OCI-LY7 (cell line): ENCODE measurements at regions of chr12 and their contacts with region 1.

Region 1: DNA sequence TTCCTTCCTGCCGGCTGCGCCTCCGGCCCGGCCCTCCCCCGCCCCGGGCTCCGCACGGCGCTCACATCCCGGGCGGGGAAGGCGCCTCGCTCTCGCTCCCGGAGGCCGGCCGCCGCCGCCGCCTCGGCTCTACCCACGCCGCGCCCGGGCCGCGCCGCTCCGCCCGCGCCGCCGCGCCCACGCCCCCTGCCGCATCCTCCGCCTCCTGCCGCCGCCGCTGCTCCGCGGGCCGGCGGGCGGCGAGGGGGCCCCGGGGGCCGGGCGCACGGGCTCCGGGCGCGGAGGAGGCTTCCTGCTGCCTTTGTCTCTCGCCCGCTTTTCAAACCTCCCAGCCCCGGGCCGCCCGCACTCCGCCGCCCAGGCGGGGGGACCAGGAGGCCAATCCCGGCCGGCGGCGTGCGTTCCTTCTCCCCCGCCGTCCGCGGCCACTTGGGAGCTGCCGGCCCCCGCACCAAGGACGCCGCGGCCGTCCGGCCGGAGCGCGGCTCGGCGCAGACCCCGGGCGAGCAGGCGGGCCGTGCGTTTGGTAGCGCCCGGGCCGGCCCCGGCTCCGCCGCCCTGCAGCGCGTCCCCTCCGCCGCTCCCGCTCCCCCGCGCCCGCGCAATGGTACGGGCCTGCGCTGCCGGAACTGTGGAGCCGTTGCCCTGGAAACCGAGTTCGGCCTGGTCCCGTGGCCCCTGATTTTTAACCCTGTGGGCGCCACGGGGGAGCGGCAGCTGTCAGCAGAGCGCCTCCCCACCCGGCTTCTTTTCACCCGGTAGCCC is at the start of gene FBXL14:
- DNase-seq: peak; percentile 97
- H3K4me3 ChIP-seq: peak within 1 kb of the TSS; percentile 86
- H3K27ac ChIP-seq: peak within 1 kb of the TSS; percentile 80
- H3K4me1 ChIP-seq: peaks cover 38% of the 10 kb centered on the region
- CTCF ChIP-seq: no peak
- total RNA-seq, gene FBXL14: 45.5 and 46.2 TPM in 2 replicates

Region 2: DNA sequence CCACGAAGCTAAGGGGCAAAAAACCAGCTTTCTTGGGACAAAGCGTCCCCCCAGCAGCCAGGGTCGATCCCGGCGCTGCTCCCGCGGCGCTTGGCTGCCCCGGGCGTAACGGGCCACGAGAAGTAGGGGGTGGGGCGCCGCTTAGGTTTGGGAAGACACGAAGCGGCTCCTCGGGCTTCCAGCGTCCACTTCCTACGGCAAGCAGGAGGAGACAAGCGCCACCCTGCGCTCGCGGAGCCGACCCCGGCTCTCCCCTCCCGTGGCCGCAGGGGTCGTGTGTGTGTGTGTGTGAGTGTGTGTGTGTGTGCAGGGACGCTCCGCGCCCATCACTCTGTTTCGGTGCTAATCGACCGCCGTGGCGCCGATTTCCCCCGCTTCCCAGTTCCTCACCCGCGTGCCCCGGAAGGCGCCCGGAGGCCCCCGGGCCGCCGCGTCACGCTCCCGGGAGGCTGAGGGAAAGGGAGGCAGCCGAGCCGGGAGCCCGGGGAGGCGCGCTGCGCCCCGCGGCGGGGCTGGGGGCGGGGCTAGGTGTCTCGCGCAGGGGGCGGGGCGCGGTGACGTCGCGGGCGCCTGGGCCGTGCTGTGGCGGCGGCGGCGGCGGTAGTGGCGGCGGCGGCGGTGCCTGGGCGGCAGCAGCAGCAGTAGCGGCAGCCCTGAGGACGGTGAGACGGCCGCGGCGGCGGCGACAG is 603.6 kb before region 1 on chr12 and contains the start of gene ERC1:
- CTCF ChIA-PET with region 1: no interaction called
- POLR2A ChIA-PET with region 1: no interaction called
- intact Hi-C with region 1: loop called (anchors 10 kb)
- DNase-seq: peak; percentile 88
- H3K4me3 ChIP-seq: peak within 1 kb of the TSS; percentile 87
- H3K27ac ChIP-seq: peak within 1 kb of the TSS; percentile 66
- H3K4me1 ChIP-seq: peaks cover 38% of the 10 kb centered on the region
- CTCF ChIP-seq: peak; percentile 44
- total RNA-seq, gene ERC1: 26.9 and 37.0 TPM in 2 replicates

Region 3: GRCh38 chr12:1204581-1205121 is 389.8 kb before region 1 on chr12:
- CTCF ChIA-PET with region 1: no interaction called
- POLR2A ChIA-PET with region 1: no interaction called
- intact Hi-C with region 1: loop called (anchors 5 kb)
- DNase-seq: peak; percentile 86
- H3K4me3 ChIP-seq: peak overlapping the region; percentile 72
- H3K27ac ChIP-seq: peak overlapping the region; percentile 100
- H3K4me1 ChIP-seq: peaks cover 63% of the 10 kb centered on the region
- CTCF ChIP-seq: no peak

Region 4: GRCh38 chr12:1553987-1554982 is 40.2 kb before region 1 on chr12:
- CTCF ChIA-PET with region 1: no interaction called
- POLR2A ChIA-PET with region 1: interaction called, 3 read pairs
- intact Hi-C with region 1: loop called (anchors 2 kb)
- DNase-seq: peak; percentile 96
- H3K4me3 ChIP-seq: peak overlapping the region; percentile 49
- H3K27ac ChIP-seq: peak overlapping the region; percentile 89
- H3K4me1 ChIP-seq: peaks cover 45% of the 10 kb centered on the region
- CTCF ChIP-seq: no peak

Region 5: GRCh38 chr12:1605129-1606020 is 10.9 kb after region 1 on chr12:
- CTCF ChIA-PET with region 1: no interaction called
- POLR2A ChIA-PET with region 1: interaction called, 31 read pairs
- intact Hi-C with region 1: no loop called
- DNase-seq: peak; percentile 85
- H3K4me3 ChIP-seq: peak overlapping the region; percentile 52
- H3K27ac ChIP-seq: no peak overlapping the region
- H3K4me1 ChIP-seq: peaks cover 60% of the 10 kb centered on the region
- CTCF ChIP-seq: peak; percentile 88

Region 6: DNA sequence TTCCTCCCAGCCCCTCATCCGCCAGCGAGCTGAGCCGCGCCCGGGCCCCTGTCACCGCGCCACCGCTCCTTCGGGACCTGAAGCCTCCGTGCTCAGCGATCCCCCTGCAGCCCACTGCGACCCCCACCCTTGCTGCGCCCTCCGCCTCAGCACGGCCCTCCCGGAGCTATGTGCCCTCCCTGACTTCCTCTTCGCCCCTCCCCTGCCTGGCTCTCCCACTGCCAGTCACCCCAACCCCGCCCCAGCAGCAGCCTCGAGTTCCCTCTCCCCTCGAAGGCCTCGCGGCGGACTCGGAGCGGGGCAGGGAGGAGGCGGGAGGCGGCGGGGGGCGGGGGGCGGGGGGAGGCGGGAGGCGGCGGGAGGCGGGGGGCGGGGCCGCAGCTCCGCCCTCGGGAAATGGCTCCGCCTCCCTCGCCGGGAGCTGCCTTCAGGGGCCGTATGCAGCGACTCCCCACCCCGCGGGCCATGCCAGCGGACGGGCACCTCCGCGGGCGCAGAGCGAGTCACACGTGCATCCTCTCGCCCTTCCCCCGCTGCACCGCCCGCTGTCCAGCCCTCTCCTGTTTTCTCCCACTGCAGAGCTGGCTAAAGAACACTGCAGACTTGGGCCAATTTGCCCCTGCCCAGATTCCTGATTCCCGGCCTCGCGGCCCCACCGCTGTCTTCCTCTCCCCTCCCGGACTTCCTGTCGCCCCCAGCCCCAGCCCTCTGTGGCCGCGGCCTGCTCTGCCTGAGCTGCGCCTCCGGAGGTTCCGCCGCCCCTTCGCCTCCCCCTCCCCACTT is 67.3 kb after region 1 on chr12:
- CTCF ChIA-PET with region 1: no interaction called
- POLR2A ChIA-PET with region 1: no interaction called
- intact Hi-C with region 1: no loop called
- DNase-seq: peak; percentile 91
- H3K4me3 ChIP-seq: peak overlapping the region; percentile 62
- H3K27ac ChIP-seq: peak overlapping the region; percentile 9
- H3K4me1 ChIP-seq: peaks cover 7% of the 10 kb centered on the region
- CTCF ChIP-seq: no peak